Transverse colon (tissue), 4 donors: ENCODE measurements at regions of chr2 and their contacts with region 1.

Region 1: GRCh38 chr2:102166189-102166845 is 20.5 kb upstream of the IL1RL2 start:
- DNase-seq: peak; percentile 27
- H3K4me3 ChIP-seq: no peak overlapping the region
- H3K27ac ChIP-seq: peak overlapping the region; percentile 29 to 36 (median 33)
- H3K4me1 ChIP-seq: peaks cover 5 to 17% (median 11%) of the 10 kb centered on the region in 4 donors
- H3K27me3 ChIP-seq: no peaks in the 10 kb centered on the region
- CTCF ChIP-seq: peak; percentile 44 to 65 (median 59)
- EP300 ChIP-seq: no peak
- POLR2A ChIP-seq: no peak

Region 2: DNA sequence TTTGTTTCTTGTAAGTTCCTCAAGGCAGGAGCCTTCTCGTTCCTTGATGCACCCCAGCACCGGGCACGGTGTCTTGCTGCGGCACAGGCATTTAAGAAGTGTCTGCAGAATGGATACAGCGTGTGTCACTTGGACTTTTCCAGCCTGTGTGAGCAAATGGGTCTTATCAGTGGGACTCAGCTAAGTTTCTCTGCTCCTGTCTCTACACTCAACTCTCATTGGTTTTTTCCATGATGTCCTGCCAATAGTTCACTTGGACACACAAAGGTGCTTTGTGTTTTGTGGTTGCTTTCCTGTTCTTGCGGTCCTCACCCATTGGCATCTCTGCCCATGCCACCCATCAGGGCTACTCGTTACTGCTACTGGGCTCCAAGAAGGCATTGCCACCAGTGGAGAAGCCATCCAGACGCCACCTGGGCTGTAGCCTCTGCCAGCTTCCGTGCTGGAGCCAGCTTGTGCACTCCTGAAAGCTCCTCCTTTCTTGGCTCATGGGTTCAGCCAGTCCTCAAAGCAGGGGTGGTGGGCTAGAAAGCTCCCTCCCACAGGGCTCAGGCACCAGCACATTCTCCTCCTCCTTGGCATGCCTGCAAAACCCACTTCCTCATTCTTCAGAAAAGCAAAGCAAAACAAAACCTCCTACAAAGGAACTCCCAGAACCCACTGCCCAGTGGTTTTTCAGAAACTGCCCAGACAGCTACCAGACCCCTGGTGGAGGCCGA is 133.1 kb before region 1 on chr2:
- in situ Hi-C with region 1: loop called in 2 of 4 experiments (anchors 10 to 25 kb)
- intact Hi-C with region 1: no loop called
- DNase-seq: peak; percentile 51
- H3K4me3 ChIP-seq: no peak overlapping the region
- H3K27ac ChIP-seq: peak overlapping the region; percentile 35 to 63 (median 54)
- H3K4me1 ChIP-seq: peaks cover 0 to 40% (median 6%) of the 10 kb centered on the region in 4 donors
- H3K27me3 ChIP-seq: no peaks in the 10 kb centered on the region
- CTCF ChIP-seq: no peak
- EP300 ChIP-seq: no peak
- POLR2A ChIP-seq: no peak